Activated CD4-positive, alpha-beta T cell treated with anti-CD3 and anti-CD28 coated beads for 36 hours (primary cell): ENCODE measurements at regions of chr1 and their contacts with region 1.

Region 1: GRCh38 chr1:180252638-180253536 is 22.8 kb downstream of the LHX4 start:
- DNase-seq: peak; percentile 87
- ATAC-seq: peak; percentile 85
- H3K4me3 Mint-ChIP-seq: no peak overlapping the region
- H3K27ac Mint-ChIP-seq: no peak overlapping the region
- H3K4me1 Mint-ChIP-seq: no peaks in the 10 kb centered on the region
- H3K27me3 Mint-ChIP-seq: peaks cover 34% of the 10 kb centered on the region

Region 2: GRCh38 chr1:180365039-180365438 is 112.2 kb after region 1 on chr1:
- CTCF ChIA-PET with region 1: interaction called, 3 read pairs
- POLR2A ChIA-PET with region 1: no interaction called
- intact Hi-C with region 1: loop called in 1 of 2 experiments (anchors 5 kb)
- DNase-seq: no peak
- ATAC-seq: no peak
- H3K4me3 Mint-ChIP-seq: no peak overlapping the region
- H3K27ac Mint-ChIP-seq: no peak overlapping the region
- H3K4me1 Mint-ChIP-seq: peaks cover 3% of the 10 kb centered on the region
- H3K27me3 Mint-ChIP-seq: no peaks in the 10 kb centered on the region

Region 3: GRCh38 chr1:180415985-180416633 is 163.2 kb after region 1 on chr1:
- CTCF ChIA-PET with region 1: interaction called, 7 read pairs
- POLR2A ChIA-PET with region 1: no interaction called
- intact Hi-C with region 1: loop called (anchors 1 kb)
- DNase-seq: no peak
- ATAC-seq: no peak
- H3K4me3 Mint-ChIP-seq: no peak overlapping the region
- H3K27ac Mint-ChIP-seq: no peak overlapping the region
- H3K4me1 Mint-ChIP-seq: no peaks in the 10 kb centered on the region
- H3K27me3 Mint-ChIP-seq: no peaks in the 10 kb centered on the region